ENCODE measurements at regions of chr17 and their contacts with region 1.

Region 1: GRCh38 chr17:42135664-42136653 is 13.4 kb downstream of the HSPB9 start:
- DNase-seq: peak; percentile 73 to 88 (median 77)
- ATAC-seq: peak; percentile 80 to 89 (median 88)
- H3K4me3 ChIP-seq: peak overlapping the region in 8 of 12 donors; percentile 1 to 38 (median 22)
- H3K27ac ChIP-seq: peak overlapping the region; percentile 39 to 91 (median 77)
- H3K4me1 ChIP-seq: peaks cover 29 to 100% (median 85%) of the 10 kb centered on the region in 12 donors
- H3K27me3 ChIP-seq: no peaks in the 10 kb centered on the region
- CTCF ChIP-seq: no peak
- POLR2A ChIP-seq: peak in 1 of 2 donors; percentile 40

Region 2: DNA sequence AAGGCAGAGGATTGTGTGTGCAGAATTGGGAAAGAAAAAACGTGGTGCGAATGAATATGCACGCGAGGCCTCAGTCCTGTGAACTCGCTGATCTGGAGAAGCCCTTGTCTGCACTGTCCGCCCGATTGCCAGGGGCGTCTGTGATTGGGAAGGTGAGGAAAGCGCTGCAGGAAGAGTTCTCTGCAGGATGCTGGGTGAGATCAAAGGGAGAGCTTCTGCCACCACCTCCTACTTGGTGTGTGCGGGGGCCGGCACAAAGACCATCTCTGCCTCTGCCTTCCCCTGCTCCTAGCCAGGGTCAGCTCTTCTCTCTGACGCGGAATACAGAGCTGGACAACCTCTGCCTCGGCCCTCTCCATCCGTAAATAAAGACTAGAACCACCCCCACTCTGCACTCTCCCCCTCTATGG is 19.7 kb after region 1 on chr17:
- intact Hi-C with region 1: loop called in 1 of 10 experiments (anchors 1 kb)
- DNase-seq: no peak
- ATAC-seq: no peak
- H3K4me3 ChIP-seq: peak overlapping the region in 11 of 12 donors; percentile 40 to 100 (median 86)
- H3K27ac ChIP-seq: peak overlapping the region in 7 of 12 donors; percentile 62 to 94 (median 76)
- H3K4me1 ChIP-seq: peaks cover 9 to 41% (median 30%) of the 10 kb centered on the region in 12 donors
- H3K27me3 ChIP-seq: no peaks in the 10 kb centered on the region
- CTCF ChIP-seq: no peak
- POLR2A ChIP-seq: no peak

Region 3: DNA sequence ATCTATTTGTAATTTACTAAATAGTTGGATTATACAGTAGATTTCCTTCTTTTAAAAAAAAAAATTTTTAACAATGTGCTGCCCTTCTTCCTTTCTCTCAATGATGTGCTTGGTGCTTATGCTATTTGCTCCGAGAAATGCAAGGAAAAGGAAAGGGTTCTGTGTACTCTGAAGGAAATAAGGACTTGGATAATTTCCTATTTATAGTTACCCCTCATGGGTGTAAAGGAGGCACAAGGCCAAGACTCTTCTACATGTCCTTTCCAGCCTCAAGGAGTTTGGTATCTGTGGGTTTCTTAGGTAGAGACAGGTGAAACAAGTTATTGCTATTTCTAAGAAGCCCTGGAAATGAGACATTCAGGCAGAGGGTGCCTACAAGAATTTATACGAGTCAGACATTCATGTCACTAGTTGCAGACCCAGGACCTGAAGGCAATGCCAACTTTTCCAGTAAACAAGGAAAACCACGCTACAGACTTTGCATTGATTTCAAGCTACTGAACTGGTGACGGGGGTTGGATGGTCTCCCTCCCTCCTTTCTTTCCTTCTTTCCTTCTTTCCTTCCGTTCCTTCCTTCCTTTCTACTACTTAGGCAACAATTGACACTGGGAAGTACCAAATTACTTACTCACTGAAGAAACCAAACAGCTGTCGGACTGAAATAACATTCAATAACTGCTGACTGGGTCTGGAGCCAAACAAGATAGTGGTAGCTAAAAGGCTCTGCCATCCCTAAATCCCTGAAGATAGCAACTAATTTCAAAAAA is 92.1 kb after region 1 on chr17:
- intact Hi-C with region 1: no loop called
- DNase-seq: no peak
- ATAC-seq: peak in 1 of 4 donors; percentile 48
- H3K4me3 ChIP-seq: no peak overlapping the region
- H3K27ac ChIP-seq: peak overlapping the region in 9 of 12 donors; percentile 5 to 69 (median 45)
- H3K4me1 ChIP-seq: peaks cover 0 to 23% (median 16%) of the 10 kb centered on the region in 12 donors
- H3K27me3 ChIP-seq: no peaks in the 10 kb centered on the region
- CTCF ChIP-seq: no peak
- POLR2A ChIP-seq: no peak

Measured in heart left ventricle (tissue), 16 donors.